MCF 10A (cell line): ENCODE measurements at regions of chr19 and their contacts with region 1.

Region 1: GRCh38 chr19:13880059-13881043 is 3.4 kb downstream of the NANOS3 start:
- DNase-seq: peak; percentile 97
- H3K4me3 Mint-ChIP-seq: peak overlapping the region; percentile 38
- H3K27ac Mint-ChIP-seq: peak overlapping the region; percentile 63
- H3K4me1 Mint-ChIP-seq: no peaks in the 10 kb centered on the region
- H3K27me3 Mint-ChIP-seq: no peaks in the 10 kb centered on the region
- CTCF ChIP-seq: peak; percentile 98

Region 2: DNA sequence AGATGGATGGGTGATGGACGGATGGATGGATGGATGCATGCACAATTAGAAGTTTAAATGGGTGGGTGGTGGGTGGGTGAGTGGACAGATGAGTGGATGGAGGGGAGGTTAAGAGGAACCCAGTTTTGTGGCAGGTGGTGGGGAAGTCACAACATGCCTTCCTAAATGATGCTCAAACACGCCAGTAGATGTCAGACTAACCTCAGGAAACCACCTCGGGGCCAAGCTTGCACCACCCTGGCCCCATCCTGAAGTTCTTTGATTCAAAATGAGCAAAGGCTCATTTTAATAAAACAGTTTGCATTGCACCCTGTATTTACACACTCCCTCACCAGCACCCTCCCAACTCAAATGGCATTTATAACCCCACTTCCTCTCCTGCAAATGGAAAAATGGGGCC is 282.7 kb before region 1 on chr19:
- CTCF ChIA-PET with region 1: no interaction called
- POLR2A ChIA-PET with region 1: no interaction called
- intact Hi-C with region 1: loop called (anchors 5 kb)
- DNase-seq: peak; percentile 75
- H3K4me3 Mint-ChIP-seq: no peak overlapping the region
- H3K27ac Mint-ChIP-seq: peak overlapping the region; percentile 44
- H3K4me1 Mint-ChIP-seq: no peaks in the 10 kb centered on the region
- H3K27me3 Mint-ChIP-seq: peaks cover 50% of the 10 kb centered on the region
- CTCF ChIP-seq: peak; percentile 78

Region 3: GRCh38 chr19:13644645-13645044 is 235.7 kb before region 1 on chr19:
- CTCF ChIA-PET with region 1: no interaction called
- POLR2A ChIA-PET with region 1: no interaction called
- intact Hi-C with region 1: no loop called
- DNase-seq: no peak
- H3K4me3 Mint-ChIP-seq: no peak overlapping the region
- H3K27ac Mint-ChIP-seq: no peak overlapping the region
- H3K4me1 Mint-ChIP-seq: no peaks in the 10 kb centered on the region
- H3K27me3 Mint-ChIP-seq: no peaks in the 10 kb centered on the region
- CTCF ChIP-seq: no peak

Region 4: DNA sequence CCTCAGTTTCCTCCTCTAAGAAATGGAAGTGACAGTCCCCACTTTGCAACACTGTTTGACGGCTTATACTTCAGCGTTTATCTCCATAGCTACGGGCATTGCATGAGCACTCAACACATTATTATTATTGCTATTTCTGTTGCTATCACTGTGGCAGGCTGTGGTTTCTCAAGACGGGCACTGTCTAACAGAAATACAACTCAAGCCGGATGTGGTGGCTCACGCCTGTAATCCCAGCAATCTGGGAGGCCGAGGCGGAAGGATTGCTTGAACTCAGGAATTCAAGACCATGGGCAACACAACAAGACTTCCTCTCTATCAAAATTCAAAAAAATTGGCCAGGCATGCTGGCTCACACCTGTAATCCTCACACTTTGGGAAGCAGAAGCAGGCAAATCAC is 90.0 kb before region 1 on chr19:
- CTCF ChIA-PET with region 1: no interaction called
- POLR2A ChIA-PET with region 1: no interaction called
- intact Hi-C with region 1: no loop called
- DNase-seq: no peak
- H3K4me3 Mint-ChIP-seq: no peak overlapping the region
- H3K27ac Mint-ChIP-seq: no peak overlapping the region
- H3K4me1 Mint-ChIP-seq: peaks cover 7% of the 10 kb centered on the region
- H3K27me3 Mint-ChIP-seq: no peaks in the 10 kb centered on the region
- CTCF ChIP-seq: no peak

Region 5: DNA sequence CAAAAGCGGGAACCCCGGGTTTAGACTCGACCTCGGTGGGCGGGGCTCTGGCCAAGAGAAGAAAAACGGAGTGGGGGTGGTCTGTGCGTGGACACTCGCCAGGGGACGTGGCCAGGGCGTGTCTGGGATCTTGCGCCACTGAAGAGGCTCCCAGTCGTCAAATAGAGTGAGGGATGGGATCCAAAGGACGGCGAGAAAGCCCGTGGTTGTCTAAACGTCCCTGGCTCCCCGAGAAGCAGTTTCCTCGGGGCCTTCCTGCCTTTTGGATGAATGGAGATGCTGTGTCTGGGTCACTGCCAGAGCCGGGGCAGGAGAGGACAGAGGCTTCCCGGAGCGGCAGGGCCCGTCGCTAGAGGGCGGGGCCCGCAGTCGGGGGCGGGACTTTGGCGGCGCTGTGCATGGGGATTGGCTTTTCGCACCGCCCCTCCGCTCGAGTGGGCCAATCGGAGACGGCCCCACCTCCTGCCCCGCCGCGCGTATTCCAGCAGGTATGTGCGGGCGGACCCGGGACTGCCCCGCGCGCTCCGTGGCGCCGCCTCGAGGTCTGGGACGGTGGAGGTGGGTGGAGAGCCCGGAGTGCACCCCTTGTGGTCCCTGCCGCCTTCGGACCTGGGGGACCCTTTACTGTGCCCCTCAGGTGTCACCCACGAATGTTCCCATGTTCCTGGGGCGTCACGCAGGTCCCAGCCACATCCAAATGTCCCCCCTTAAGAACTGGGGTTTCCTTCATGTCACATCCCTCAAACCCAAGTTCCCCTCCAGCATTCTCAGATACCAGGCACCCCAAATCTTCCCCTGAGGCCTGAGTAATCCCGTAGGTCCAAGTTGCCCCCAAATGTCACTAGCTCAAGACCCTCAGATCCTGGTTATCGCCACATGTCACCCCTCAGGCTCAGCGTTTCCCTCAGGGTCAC is 46.8 kb before region 1 on chr19:
- CTCF ChIA-PET with region 1: no interaction called
- POLR2A ChIA-PET with region 1: no interaction called
- intact Hi-C with region 1: no loop called
- DNase-seq: peak; percentile 94
- H3K4me3 Mint-ChIP-seq: peak overlapping the region; percentile 46
- H3K27ac Mint-ChIP-seq: peak overlapping the region; percentile 75
- H3K4me1 Mint-ChIP-seq: peaks cover 7% of the 10 kb centered on the region
- H3K27me3 Mint-ChIP-seq: no peaks in the 10 kb centered on the region
- CTCF ChIP-seq: peak; percentile 29

Region 6: GRCh38 chr19:13952154-13953035 is 72.0 kb after region 1 on chr19 and contains the start of gene DCAF15:
- CTCF ChIA-PET with region 1: interaction called, 5 read pairs
- POLR2A ChIA-PET with region 1: interaction called, 11 read pairs
- intact Hi-C with region 1: loop called (anchors 2 kb)
- DNase-seq: peak; percentile 100
- H3K4me3 Mint-ChIP-seq: peak within 1 kb of the TSS; percentile 89
- H3K27ac Mint-ChIP-seq: peak within 1 kb of the TSS; percentile 63
- H3K4me1 Mint-ChIP-seq: peaks cover 9% of the 10 kb centered on the region
- H3K27me3 Mint-ChIP-seq: no peaks in the 10 kb centered on the region
- CTCF ChIP-seq: no peak
- total RNA-seq, gene DCAF15: 17.6 and 19.3 TPM in 2 replicates

Region 7: GRCh38 chr19:14048443-14049153 is 168.2 kb after region 1 on chr19:
- CTCF ChIA-PET with region 1: interaction called, 4 read pairs
- POLR2A ChIA-PET with region 1: interaction called, 5 read pairs
- intact Hi-C with region 1: loop called (anchors 1 kb)
- DNase-seq: peak; percentile 39
- H3K4me3 Mint-ChIP-seq: no peak overlapping the region
- H3K27ac Mint-ChIP-seq: no peak overlapping the region
- H3K4me1 Mint-ChIP-seq: no peaks in the 10 kb centered on the region
- H3K27me3 Mint-ChIP-seq: no peaks in the 10 kb centered on the region
- CTCF ChIP-seq: peak; percentile 78

Region 8: DNA sequence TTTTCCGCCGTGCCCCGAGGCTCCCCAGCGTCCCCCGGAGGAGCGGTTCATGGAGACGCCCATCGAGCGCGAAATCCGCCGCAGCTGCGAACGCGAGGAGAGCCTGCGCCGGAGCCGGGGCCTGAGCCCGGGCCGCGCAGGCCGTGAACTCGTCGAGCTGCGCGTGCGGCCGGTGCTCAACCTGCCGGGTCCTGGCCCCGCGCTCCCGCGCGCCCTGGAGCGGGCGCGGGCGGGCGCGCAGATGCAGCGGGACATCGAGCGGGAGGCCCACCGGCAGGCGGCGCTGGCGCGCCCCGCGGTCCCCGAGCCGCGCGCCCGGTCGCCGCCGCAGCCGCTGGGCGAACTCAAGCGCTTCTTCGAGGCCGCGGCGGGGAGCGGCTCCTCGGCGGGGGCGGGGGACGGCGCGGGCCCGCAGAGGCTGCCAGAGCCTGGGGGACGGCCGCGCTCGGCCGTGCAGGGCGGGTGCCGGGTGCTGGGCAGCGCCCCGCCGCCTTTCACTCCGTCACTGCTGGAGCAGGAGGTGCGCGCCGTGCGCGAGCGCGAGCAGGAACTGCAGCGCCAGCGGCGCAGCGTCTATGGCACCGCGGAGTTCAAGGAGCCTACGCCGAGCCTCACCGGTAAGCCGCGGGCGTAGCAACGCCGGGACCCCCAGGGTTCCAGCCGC is 193.0 kb after region 1 on chr19:
- CTCF ChIA-PET with region 1: interaction called, 22 read pairs
- POLR2A ChIA-PET with region 1: no interaction called
- intact Hi-C with region 1: loop called (anchors 1 kb)
- DNase-seq: peak; percentile 71
- H3K4me3 Mint-ChIP-seq: peak overlapping the region; percentile 86
- H3K27ac Mint-ChIP-seq: no peak overlapping the region
- H3K4me1 Mint-ChIP-seq: no peaks in the 10 kb centered on the region
- H3K27me3 Mint-ChIP-seq: no peaks in the 10 kb centered on the region
- CTCF ChIP-seq: peak; percentile 37

Region 9: GRCh38 chr19:14081325-14082093 is 201.2 kb after region 1 on chr19:
- CTCF ChIA-PET with region 1: interaction called, 17 read pairs
- POLR2A ChIA-PET with region 1: no interaction called
- intact Hi-C with region 1: no loop called
- DNase-seq: peak; percentile 100
- H3K4me3 Mint-ChIP-seq: peak overlapping the region; percentile 90
- H3K27ac Mint-ChIP-seq: peak overlapping the region; percentile 96
- H3K4me1 Mint-ChIP-seq: no peaks in the 10 kb centered on the region
- H3K27me3 Mint-ChIP-seq: no peaks in the 10 kb centered on the region
- CTCF ChIP-seq: no peak

Region 10: GRCh38 chr19:14117668-14118164 is 237.4 kb after region 1 on chr19 and contains the start of gene PRKACA:
- CTCF ChIA-PET with region 1: interaction called, 5 read pairs
- POLR2A ChIA-PET with region 1: no interaction called
- intact Hi-C with region 1: loop called (anchors 1 kb)
- DNase-seq: peak; percentile 99
- H3K4me3 Mint-ChIP-seq: peak within 1 kb of the TSS; percentile 83
- H3K27ac Mint-ChIP-seq: peak within 1 kb of the TSS; percentile 93
- H3K4me1 Mint-ChIP-seq: peaks cover 18% of the 10 kb centered on the region
- H3K27me3 Mint-ChIP-seq: no peaks in the 10 kb centered on the region
- CTCF ChIP-seq: no peak
- total RNA-seq, gene PRKACA: 44.7 and 49.8 TPM in 2 replicates